CD8-positive, alpha-beta T cell (primary cell): ENCODE measurements at regions of chr7 and their contacts with region 1.

Region 1: GRCh38 chr7:74269757-74270277 is 15.6 kb upstream of the RFC2 start:
- DNase-seq: peak; percentile 25 to 83 (median 65)
- ATAC-seq: peak; percentile 93
- H3K4me3 ChIP-seq: peak overlapping the region; percentile 50 to 61
- H3K4me3 Mint-ChIP-seq: peak overlapping the region; percentile 88
- H3K27ac ChIP-seq: no peak overlapping the region
- H3K27ac Mint-ChIP-seq: no peak overlapping the region
- H3K4me1 ChIP-seq: no peaks in the 10 kb centered on the region
- H3K4me1 Mint-ChIP-seq: peaks cover 7% of the 10 kb centered on the region
- H3K27me3 ChIP-seq: no peaks in the 10 kb centered on the region
- H3K27me3 Mint-ChIP-seq: peaks cover 5% of the 10 kb centered on the region
- CTCF ChIP-seq: no peak

Region 2: DNA sequence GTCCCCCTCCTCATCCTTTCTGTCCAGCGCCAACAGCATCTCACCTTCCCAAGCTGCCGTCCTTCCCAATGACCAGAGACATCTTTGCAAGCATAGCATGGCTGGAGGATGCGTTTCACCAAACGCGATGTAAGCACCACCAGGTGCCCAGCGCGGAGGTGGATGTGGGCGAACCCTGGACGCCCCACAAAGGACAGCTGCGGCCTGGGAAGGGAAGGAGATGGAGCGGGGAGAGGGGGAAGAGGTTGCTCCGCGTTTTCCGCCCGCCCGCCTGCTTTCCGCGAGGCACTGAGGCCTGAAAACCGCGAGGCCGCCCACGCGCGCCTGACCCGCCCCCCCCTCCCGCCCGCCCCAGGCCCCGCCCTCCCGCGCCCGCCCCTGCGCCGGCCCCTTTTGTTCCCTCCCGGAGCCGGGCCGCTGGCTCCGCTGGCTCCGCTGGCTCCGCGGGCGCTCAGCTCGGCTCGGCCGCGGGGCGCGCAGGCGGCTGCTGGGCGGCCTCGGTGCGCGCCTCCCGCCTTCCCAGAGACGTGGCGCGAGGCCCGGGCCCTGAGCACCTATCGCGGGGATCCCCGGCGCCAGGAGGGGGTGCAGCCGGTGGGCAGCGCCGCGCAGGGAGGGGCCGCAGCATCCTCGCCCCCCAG is 19.3 kb after region 1 on chr7 and contains the start of gene CLIP2:
- CTCF ChIA-PET with region 1: interaction called, 17 read pairs
- POLR2A ChIA-PET with region 1: interaction called, 4 read pairs
- intact Hi-C with region 1: loop called in 1 of 2 experiments (anchors 1 kb)
- DNase-seq: peak; percentile 59 to 87 (median 76)
- ATAC-seq: peak; percentile 85
- H3K4me3 ChIP-seq: peak within 1 kb of the TSS; percentile 54 to 75
- H3K4me3 Mint-ChIP-seq: peak within 1 kb of the TSS; percentile 89
- H3K27ac ChIP-seq: no peak within 1 kb of the TSS
- H3K27ac Mint-ChIP-seq: no peak within 1 kb of the TSS
- H3K4me1 ChIP-seq: peaks cover 22% of the 10 kb centered on the region
- H3K4me1 Mint-ChIP-seq: peaks cover 22% of the 10 kb centered on the region
- H3K27me3 ChIP-seq: no peaks in the 10 kb centered on the region
- H3K27me3 Mint-ChIP-seq: peaks cover 8% of the 10 kb centered on the region
- CTCF ChIP-seq: no peak
- total RNA-seq, gene CLIP2: 2.1 to 2.7 TPM

Region 3: DNA sequence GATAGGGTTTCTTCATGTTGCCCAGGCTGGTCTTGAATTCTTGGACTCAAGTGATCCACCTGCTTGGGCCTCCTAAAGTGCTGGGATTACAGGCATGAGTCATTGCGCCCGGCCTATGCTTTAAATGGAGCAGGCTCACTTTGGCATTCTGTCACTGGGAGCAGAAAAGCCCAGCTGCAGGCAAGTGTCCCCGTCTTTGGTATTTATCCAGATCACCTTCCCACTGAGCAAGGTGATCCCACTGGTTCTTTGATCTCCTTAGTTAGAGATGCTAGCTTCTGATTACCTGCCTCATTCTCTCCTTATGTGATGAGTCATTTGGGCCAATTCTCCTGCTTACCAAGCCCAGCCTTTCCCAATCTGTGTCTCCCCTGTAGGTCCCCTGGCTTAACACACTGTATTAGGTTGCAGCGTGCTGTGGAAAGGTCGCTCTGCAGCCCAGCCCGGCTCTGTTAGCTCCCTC is 1261.6 kb after region 1 on chr7:
- CTCF ChIA-PET with region 1: no interaction called
- POLR2A ChIA-PET with region 1: no interaction called
- intact Hi-C with region 1: no loop called
- DNase-seq: no peak
- ATAC-seq: no peak
- H3K4me3 ChIP-seq: no peak overlapping the region
- H3K4me3 Mint-ChIP-seq: no peak overlapping the region
- H3K27ac ChIP-seq: no peak overlapping the region
- H3K27ac Mint-ChIP-seq: no peak overlapping the region
- H3K4me1 ChIP-seq: peaks cover 8% of the 10 kb centered on the region
- H3K4me1 Mint-ChIP-seq: peaks cover 15% of the 10 kb centered on the region
- H3K27me3 ChIP-seq: no peaks in the 10 kb centered on the region
- H3K27me3 Mint-ChIP-seq: no peaks in the 10 kb centered on the region
- CTCF ChIP-seq: no peak